ENCODE measurements at regions of chr1 and their contacts with region 1.

Region 1: GRCh38 chr1:207828485-207829158 is 76.8 kb downstream of the CD46 start:
- DNase-seq: peak; percentile 46
- H3K4me3 Mint-ChIP-seq: no peak overlapping the region
- H3K27ac Mint-ChIP-seq: peak overlapping the region; percentile 65
- H3K4me1 Mint-ChIP-seq: peaks cover 84% of the 10 kb centered on the region
- H3K27me3 Mint-ChIP-seq: no peaks in the 10 kb centered on the region

Region 2: GRCh38 chr1:207787776-207788175 is 40.8 kb before region 1 on chr1:
- intact Hi-C with region 1: no loop called
- DNase-seq: no peak
- H3K4me3 Mint-ChIP-seq: no peak overlapping the region
- H3K27ac Mint-ChIP-seq: no peak overlapping the region
- H3K4me1 Mint-ChIP-seq: peaks cover 3% of the 10 kb centered on the region
- H3K27me3 Mint-ChIP-seq: no peaks in the 10 kb centered on the region

Region 3: GRCh38 chr1:207848234-207848633 is 19.6 kb after region 1 on chr1:
- intact Hi-C with region 1: loop called (anchors 1 kb)
- DNase-seq: no peak
- H3K4me3 Mint-ChIP-seq: peak overlapping the region; percentile 5
- H3K27ac Mint-ChIP-seq: peak overlapping the region; percentile 65
- H3K4me1 Mint-ChIP-seq: peaks cover 50% of the 10 kb centered on the region
- H3K27me3 Mint-ChIP-seq: no peaks in the 10 kb centered on the region

Region 4: GRCh38 chr1:207868774-207869721 is 40.4 kb after region 1 on chr1:
- intact Hi-C with region 1: loop called (anchors 1 kb)
- DNase-seq: peak; percentile 63
- H3K4me3 Mint-ChIP-seq: peak overlapping the region; percentile 89
- H3K27ac Mint-ChIP-seq: peak overlapping the region; percentile 87
- H3K4me1 Mint-ChIP-seq: peaks cover 79% of the 10 kb centered on the region
- H3K27me3 Mint-ChIP-seq: no peaks in the 10 kb centered on the region

Region 5: DNA sequence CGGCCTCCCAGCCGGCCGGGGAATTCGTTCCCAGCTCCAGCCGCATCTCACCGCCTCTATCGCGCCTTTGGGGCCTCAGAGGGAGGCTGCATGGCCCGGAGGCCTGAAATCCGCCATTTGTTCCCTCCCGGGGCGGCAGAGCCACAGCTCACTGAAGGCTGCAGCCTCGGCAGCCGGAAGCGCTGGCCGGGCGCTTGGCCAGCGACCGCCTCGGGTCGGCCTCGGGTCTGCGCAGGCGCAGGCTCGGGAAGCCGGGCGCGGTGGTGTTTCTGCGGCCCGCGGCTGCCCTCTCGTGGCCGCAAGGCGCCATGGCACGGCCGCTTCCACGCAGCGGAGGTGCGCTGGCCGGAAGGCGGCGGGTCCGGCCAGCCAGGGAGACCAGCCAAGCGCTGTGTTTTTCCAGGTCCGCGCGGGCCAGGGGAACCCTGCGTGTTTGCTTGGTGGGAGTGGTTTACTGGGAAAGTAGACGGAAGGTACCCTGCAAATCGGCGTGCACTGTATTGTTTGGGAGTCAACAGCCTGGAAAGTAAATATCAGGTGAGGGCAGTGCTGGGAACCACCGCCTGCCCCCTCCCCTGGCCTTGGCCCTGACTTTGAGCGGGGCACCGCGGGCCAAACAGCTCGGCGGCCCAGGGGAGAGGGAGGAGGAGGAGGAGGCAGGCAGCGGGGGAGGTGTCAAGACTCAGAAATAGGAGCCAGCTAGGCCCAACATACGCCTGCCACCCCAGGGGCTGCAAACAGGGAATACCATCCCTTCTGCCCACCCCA is 135.0 kb after region 1 on chr1:
- intact Hi-C with region 1: loop called (anchors 1 kb)
- DNase-seq: peak; percentile 80
- H3K4me3 Mint-ChIP-seq: peak overlapping the region; percentile 76
- H3K27ac Mint-ChIP-seq: no peak overlapping the region
- H3K4me1 Mint-ChIP-seq: peaks cover 11% of the 10 kb centered on the region
- H3K27me3 Mint-ChIP-seq: peaks cover 44% of the 10 kb centered on the region

Measured in activated T-helper 2 cell treated with anti-CD3 and anti-CD28 coated beads, Interferon-gamma antibody, Interleukin-2, Interleukin-4, amounts not matched to agents 10 μg/mL and 5 μg/mL and 100 μg/mL, durations not matched to agents 14 hours and 24 hours and 36 hours (primary cell).